ENCODE measurements at regions of chr5 and their contacts with region 1.

Region 1: GRCh38 chr5:172293054-172293744 is 9.6 kb upstream of the UBTD2 start:
- DNase-seq: peak; percentile 76
- ATAC-seq: peak; percentile 100
- H3K4me3 Mint-ChIP-seq: no peak overlapping the region
- H3K27ac Mint-ChIP-seq: no peak overlapping the region
- H3K4me1 Mint-ChIP-seq: no peaks in the 10 kb centered on the region
- H3K27me3 Mint-ChIP-seq: peaks cover 6% of the 10 kb centered on the region
- CTCF ChIP-seq: peak; percentile 84

Region 2: DNA sequence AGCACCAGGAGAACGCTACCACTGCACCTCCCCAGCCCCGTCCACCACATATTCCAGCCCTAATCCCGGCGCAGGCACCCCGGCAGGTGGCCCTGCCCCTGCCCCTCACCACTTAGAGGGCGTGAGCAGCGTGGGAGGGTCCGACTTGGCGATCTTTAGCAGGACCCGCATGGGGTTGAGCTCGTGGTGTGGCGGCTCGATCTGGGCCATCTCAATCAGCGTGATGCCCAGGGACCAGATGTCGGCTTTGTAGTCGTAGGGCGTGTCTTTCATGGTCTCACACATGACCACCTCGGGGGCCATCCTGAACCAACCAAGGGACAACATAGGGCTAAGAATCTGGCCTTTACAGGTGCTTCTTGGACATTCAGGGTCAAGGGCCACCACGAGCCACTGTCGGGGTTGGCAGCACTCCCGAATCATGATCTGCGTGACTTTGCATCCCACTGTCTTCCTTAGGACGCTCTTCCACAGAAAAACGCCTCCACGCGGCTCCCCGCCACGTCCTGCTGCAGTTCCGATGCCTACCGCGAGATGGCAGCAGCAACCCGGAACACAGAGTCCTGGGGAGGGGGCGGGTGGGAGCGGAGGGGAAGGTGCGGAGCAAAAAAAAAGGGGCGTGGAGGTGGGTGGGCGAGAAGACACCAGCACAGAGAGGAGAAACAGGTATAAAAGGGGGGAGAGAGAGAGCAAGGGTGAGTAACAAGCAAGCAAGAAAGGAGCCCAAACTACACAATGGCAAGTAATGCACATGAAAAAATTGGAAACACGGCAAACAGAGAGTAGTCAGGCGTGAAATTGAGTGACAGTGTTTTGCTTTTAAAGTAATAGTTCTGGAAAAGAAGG is 186.5 kb before region 1 on chr5:
- CTCF ChIA-PET with region 1: interaction called, 13 read pairs
- POLR2A ChIA-PET with region 1: no interaction called
- intact Hi-C with region 1: no loop called
- DNase-seq: peak; percentile 74
- ATAC-seq: no peak
- H3K4me3 Mint-ChIP-seq: no peak overlapping the region
- H3K27ac Mint-ChIP-seq: peak overlapping the region; percentile 84
- H3K4me1 Mint-ChIP-seq: peaks cover 60% of the 10 kb centered on the region
- H3K27me3 Mint-ChIP-seq: no peaks in the 10 kb centered on the region
- CTCF ChIP-seq: peak; percentile 98

Region 3: GRCh38 chr5:172199446-172199845 is 93.8 kb before region 1 on chr5:
- CTCF ChIA-PET with region 1: interaction called, 10 read pairs
- POLR2A ChIA-PET with region 1: no interaction called
- intact Hi-C with region 1: no loop called
- DNase-seq: no peak
- ATAC-seq: no peak
- H3K4me3 Mint-ChIP-seq: no peak overlapping the region
- H3K27ac Mint-ChIP-seq: no peak overlapping the region
- H3K4me1 Mint-ChIP-seq: no peaks in the 10 kb centered on the region
- H3K27me3 Mint-ChIP-seq: peaks cover 9% of the 10 kb centered on the region
- CTCF ChIP-seq: no peak

Region 4: GRCh38 chr5:172303572-172304335 is 10.6 kb after region 1 on chr5:
- CTCF ChIA-PET with region 1: interaction called, 21 read pairs
- POLR2A ChIA-PET with region 1: no interaction called
- intact Hi-C with region 1: no loop called
- DNase-seq: no peak
- ATAC-seq: no peak
- H3K4me3 Mint-ChIP-seq: no peak overlapping the region
- H3K27ac Mint-ChIP-seq: no peak overlapping the region
- H3K4me1 Mint-ChIP-seq: no peaks in the 10 kb centered on the region
- H3K27me3 Mint-ChIP-seq: peaks cover 3% of the 10 kb centered on the region
- CTCF ChIP-seq: no peak